ENCODE measurements at regions of chr3 and their contacts with region 1.

Region 1: GRCh38 chr3:196867507-196868296 is at the start of gene SENP5:
- DNase-seq: peak; percentile 89
- H3K4me3 ChIP-seq: peak within 1 kb of the TSS; percentile 87 to 99 (median 99)
- H3K27ac ChIP-seq: peak within 1 kb of the TSS; percentile 82
- H3K4me1 ChIP-seq: no peaks in the 10 kb centered on the region
- H3K27me3 ChIP-seq: no peaks in the 10 kb centered on the region
- CTCF ChIP-seq: no peak
- total RNA-seq, gene SENP5: 30.5 to 39.7 TPM

Region 2: GRCh38 chr3:196778755-196779154 is 88.9 kb before region 1 on chr3:
- CTCF ChIA-PET with region 1: no interaction called
- dilution Hi-C with region 1: loop called (anchors 5 kb)
- in situ Hi-C with region 1: no loop called
- intact Hi-C with region 1: no loop called
- DNase-seq: peak; percentile 84
- H3K4me3 ChIP-seq: no peak overlapping the region
- H3K27ac ChIP-seq: peak overlapping the region; percentile 4
- H3K4me1 ChIP-seq: peaks cover 32% of the 10 kb centered on the region
- H3K27me3 ChIP-seq: no peaks in the 10 kb centered on the region
- CTCF ChIP-seq: no peak

Region 3: DNA sequence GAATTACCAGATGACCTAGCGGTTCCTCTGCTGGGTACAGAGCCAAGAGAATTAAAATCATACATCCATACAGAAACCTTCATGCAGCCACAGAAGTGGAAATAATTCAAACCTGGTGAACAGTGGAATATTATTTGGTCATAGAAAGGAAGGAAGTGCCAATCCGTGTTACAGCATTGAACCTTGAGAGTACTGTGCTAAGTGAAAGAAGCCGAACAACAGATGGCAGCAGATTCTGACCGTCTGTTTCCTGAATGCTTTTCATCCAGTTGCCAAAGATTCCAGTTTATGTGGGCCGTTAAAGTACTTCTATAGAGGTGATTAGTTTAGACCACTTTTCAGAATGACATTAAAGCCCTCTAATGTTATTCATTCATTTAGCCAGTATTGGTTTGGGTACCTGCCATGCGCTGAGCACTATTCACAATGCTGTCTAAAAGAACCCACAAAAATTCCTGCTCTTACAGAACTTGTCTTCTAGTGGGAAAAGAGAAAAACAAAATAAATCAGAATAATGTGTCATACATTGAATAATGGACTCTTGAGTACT is 45.8 kb before region 1 on chr3:
- CTCF ChIA-PET with region 1: no interaction called
- dilution Hi-C with region 1: loop called (anchors 5 kb)
- in situ Hi-C with region 1: no loop called
- intact Hi-C with region 1: no loop called
- DNase-seq: no peak
- H3K4me3 ChIP-seq: no peak overlapping the region
- H3K27ac ChIP-seq: no peak overlapping the region
- H3K4me1 ChIP-seq: no peaks in the 10 kb centered on the region
- H3K27me3 ChIP-seq: no peaks in the 10 kb centered on the region
- CTCF ChIP-seq: no peak

Region 4: GRCh38 chr3:196883361-196883760 is 15.7 kb after region 1 on chr3:
- CTCF ChIA-PET with region 1: no interaction called
- dilution Hi-C with region 1: no loop called
- in situ Hi-C with region 1: no loop called
- intact Hi-C with region 1: no loop called
- DNase-seq: no peak
- H3K4me3 ChIP-seq: no peak overlapping the region
- H3K27ac ChIP-seq: no peak overlapping the region
- H3K4me1 ChIP-seq: no peaks in the 10 kb centered on the region
- H3K27me3 ChIP-seq: no peaks in the 10 kb centered on the region
- CTCF ChIP-seq: no peak

Measured in mammary epithelial cell (primary cell).